ENCODE measurements at regions of chr17 and their contacts with region 1.

Region 1: GRCh38 chr17:76557368-76558197 is 17.7 kb downstream of the PRCD start:
- DNase-seq: peak; percentile 86 to 97
- ATAC-seq: peak; percentile 83 to 91 (median 85)
- H3K4me3 ChIP-seq: peak overlapping the region; percentile 72
- H3K4me3 Mint-ChIP-seq: peak overlapping the region; percentile 100
- H3K27ac ChIP-seq: peak overlapping the region; percentile 94
- H3K27ac Mint-ChIP-seq: peak overlapping the region; percentile 100
- H3K4me1 ChIP-seq: peaks cover 34% of the 10 kb centered on the region
- H3K4me1 Mint-ChIP-seq: peaks cover 32 to 34% of the 10 kb centered on the region in 2 donors
- H3K27me3 ChIP-seq: no peaks in the 10 kb centered on the region
- H3K27me3 Mint-ChIP-seq: no peaks in the 10 kb centered on the region
- CTCF ChIP-seq: no peak

Region 2: GRCh38 chr17:76623271-76624146 is 65.9 kb after region 1 on chr17:
- intact Hi-C with region 1: loop called (anchors 2 kb)
- DNase-seq: peak; percentile 73 to 86
- ATAC-seq: peak; percentile 94 to 100 (median 99)
- H3K4me3 ChIP-seq: no peak overlapping the region
- H3K4me3 Mint-ChIP-seq: no peak overlapping the region
- H3K27ac ChIP-seq: no peak overlapping the region
- H3K27ac Mint-ChIP-seq: peak overlapping the region in 1 of 2 donors; percentile 23
- H3K4me1 ChIP-seq: no peaks in the 10 kb centered on the region
- H3K4me1 Mint-ChIP-seq: peaks cover 4 to 7% of the 10 kb centered on the region in 2 donors
- H3K27me3 ChIP-seq: no peaks in the 10 kb centered on the region
- H3K27me3 Mint-ChIP-seq: peaks cover 10 to 15% of the 10 kb centered on the region in 2 donors
- CTCF ChIP-seq: peak; percentile 96

Region 3: GRCh38 chr17:76671123-76671911 is 113.7 kb after region 1 on chr17:
- intact Hi-C with region 1: loop called (anchors 5 kb)
- DNase-seq: peak; percentile 97 to 100
- ATAC-seq: peak; percentile 98 to 100 (median 99)
- H3K4me3 ChIP-seq: peak overlapping the region; percentile 81
- H3K4me3 Mint-ChIP-seq: peak overlapping the region; percentile 87
- H3K27ac ChIP-seq: peak overlapping the region; percentile 89
- H3K27ac Mint-ChIP-seq: peak overlapping the region; percentile 91 to 97
- H3K4me1 ChIP-seq: peaks cover 17% of the 10 kb centered on the region
- H3K4me1 Mint-ChIP-seq: peaks cover 23 to 26% of the 10 kb centered on the region in 2 donors
- H3K27me3 ChIP-seq: no peaks in the 10 kb centered on the region
- H3K27me3 Mint-ChIP-seq: no peaks in the 10 kb centered on the region
- CTCF ChIP-seq: no peak

Measured in natural killer cell (primary cell).